ENCODE measurements at regions of chr2 and their contacts with region 1.

Region 1: DNA sequence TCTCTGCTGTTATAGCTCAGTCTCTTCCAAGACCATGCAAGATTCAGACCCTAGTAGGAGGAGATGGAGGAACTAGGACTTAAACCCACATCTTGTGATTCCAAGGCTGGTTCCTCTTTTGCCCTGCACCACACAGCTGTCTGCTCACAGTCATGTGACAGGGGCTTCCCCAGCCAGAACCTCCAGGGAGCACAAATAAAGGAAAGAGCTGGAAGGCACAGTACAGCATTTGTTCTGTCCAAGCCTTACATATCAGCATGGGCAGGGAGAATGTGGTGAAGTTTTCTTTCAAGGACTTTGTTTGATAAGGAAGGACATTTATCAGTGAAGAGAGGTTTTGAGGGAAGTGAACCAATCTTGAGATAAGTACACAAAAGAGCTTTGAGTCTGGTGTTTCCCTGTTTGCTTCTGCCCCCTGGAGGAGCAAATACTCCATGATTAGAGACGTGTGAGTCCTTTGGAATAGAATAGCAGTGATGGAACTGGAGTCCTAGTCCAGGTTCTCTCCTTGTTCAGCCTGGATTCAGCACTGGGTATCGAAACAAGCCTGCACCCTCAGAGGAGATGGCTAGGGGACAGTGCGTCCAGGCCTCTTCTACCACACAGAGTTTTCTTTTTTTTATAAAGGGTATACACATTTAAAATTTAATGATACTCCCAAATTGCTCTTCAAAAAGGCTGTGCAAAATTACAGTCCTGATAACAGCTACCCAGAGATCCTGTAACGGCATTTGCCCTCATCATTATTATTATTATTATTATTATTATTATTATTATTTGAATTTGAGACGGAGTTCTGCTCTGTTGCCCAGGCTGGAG is 24.6 kb upstream of the CASP10 start:
- H3K4me3 ChIP-seq: no peak overlapping the region
- H3K27ac ChIP-seq: no peak overlapping the region
- H3K4me1 ChIP-seq: 0 out of 2 replicates have a peak, but pooled peaks cover 2% of the 10 kb centered on the region
- CTCF ChIP-seq: peak; percentile 62

Region 2: DNA sequence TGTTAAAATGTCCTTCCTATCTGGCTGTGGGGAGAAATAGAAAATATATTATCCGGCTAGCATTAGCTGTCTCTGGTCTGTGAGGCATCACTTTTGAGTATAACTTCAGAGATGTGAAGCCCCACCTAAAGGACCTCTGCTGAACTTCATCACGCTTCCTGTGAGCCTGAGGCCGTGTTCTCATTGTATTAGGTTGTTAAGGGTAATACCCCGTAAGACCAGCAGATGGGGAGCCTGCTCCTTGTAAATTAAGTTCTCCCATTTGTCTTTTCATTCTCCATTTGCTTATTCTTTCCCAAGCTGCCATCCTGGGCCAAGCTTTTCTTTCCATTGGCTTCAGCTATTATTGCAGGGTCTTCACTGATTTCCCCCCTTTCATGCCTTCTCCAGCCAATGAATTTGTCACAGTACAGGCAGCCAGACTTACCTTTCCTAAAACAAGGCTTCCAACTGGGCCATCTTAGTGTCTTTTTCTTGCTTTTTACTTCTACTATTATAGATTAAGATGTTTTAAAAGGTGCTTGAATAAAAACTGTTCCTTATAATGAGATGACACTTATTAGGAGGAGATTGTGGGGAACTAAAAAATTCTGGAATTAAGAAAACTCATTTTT is 256.8 kb before region 1 on chr2:
- CTCF ChIA-PET with region 1: interaction called, 20 read pairs
- POLR2A ChIA-PET with region 1: interaction called, 5 read pairs
- H3K4me3 ChIP-seq: no peak overlapping the region
- H3K27ac ChIP-seq: no peak overlapping the region
- H3K4me1 ChIP-seq: no peaks in the 10 kb centered on the region
- CTCF ChIP-seq: peak; percentile 78

Region 3: DNA sequence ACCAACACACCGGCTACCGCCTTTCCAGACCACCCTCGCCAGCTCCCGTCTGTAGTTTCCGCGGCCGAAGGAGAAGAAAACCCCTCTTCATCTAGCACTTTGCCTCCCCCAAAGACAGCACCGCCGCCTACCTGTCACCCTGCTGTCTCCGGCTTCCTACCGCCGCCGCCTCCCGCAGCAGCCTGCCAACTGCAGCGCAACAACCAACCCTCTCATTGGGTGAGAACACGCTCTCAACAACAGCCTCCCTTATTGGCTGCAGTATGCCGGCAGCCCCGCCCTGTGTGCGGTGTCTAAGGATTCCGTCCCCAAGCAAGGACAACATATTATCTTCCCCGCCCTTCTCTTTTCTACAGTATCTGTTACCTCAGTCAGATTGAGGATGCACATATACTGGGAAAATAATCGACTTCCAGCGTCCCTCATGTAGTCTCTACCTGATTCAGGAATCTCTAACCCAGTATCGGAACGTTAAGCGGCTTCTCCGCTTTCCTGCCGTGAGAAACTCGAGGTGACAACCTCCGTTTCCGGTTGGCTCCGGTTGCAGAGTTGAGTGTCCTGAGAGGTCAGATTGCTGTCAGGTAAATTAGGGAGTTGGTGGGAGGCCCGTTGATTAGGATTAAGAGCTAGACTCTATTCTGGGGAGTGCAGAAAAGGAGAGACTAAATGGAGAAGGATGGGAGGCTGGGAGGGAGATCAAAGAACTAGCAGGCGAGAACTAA is 86.7 kb before region 1 on chr2 and contains the starts of genes HYCC2 and NDUFB3:
- CTCF ChIA-PET with region 1: interaction called, 39 read pairs
- POLR2A ChIA-PET with region 1: interaction called, 6 read pairs
- H3K4me3 ChIP-seq: peak within 1 kb of the TSS; percentile 100
- H3K27ac ChIP-seq: peak within 1 kb of the TSS; percentile 85
- H3K4me1 ChIP-seq: 0 out of 2 replicates have a peak, but pooled peaks cover 3% of the 10 kb centered on the region
- CTCF ChIP-seq: peak; percentile 98

Region 4: DNA sequence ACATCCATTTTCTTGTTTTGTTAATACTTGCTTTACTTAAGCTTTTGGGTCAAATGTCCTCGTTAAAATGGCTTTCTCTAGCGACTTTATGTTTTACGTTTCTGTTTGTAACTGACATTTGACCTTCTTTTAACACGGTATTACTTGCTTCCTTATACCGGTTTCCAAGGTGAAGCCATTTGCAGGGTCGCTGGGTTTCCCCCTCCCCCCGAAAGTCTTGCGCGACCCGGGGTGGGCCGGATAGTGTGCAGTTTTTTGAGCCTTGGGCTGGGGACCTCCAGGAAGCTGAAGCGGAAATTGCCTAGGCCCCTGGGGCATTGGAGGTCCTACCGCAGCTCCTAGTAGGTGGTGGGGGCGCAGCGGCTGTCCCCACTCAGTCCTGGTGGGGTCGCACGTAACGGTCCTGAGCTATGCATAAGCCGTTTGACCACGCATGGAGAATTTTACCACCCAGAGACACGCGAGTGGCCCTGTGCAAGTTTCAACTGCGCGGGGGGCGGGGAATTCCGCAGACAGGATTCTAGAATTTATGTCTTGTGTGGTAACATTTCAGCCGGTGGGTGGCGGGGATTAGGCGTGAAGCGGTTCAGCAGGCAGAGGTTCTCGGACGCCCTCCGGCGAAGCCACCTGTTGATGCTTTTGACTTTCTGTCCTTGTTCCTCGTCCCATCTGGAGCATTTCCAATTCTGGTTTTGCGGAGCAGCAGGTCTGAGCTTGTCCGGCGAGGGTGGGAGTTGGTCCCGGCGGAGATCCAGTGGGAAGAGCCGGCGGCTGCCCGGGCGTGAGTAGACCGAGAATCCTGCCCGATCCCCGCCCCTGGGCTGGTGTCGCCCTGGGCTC is 40.0 kb before region 1 on chr2:
- CTCF ChIA-PET with region 1: interaction called, 25 read pairs
- POLR2A ChIA-PET with region 1: interaction called, 7 read pairs
- H3K4me3 ChIP-seq: peak overlapping the region; percentile 40
- H3K27ac ChIP-seq: peak overlapping the region; percentile 95
- H3K4me1 ChIP-seq: peaks cover 5% of the 10 kb centered on the region; the same call in 1 of the 2 replicates
- CTCF ChIP-seq: peak; percentile 94

Region 5: DNA sequence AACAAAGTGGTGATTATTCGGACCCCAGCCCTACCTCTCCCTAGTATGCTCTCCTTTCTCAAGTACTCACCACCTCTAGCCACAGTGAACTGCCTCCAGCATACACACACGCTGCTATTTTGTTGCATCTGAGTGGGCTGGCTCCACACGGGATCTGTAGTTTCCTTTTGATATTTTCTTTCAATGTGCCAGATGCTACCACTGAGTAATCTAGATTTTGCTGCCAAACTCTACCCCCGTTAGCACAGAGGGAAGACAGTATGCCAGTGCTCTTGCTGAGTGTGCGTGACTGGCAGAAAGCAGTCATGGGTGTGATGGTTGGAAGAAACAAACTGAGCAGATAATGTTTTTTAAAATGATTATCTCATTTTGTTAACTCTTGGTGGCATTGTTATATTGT is 30.8 kb before region 1 on chr2:
- CTCF ChIA-PET with region 1: interaction called, 11 read pairs
- POLR2A ChIA-PET with region 1: interaction called, 3 read pairs
- H3K4me3 ChIP-seq: no peak overlapping the region
- H3K27ac ChIP-seq: no peak overlapping the region
- H3K4me1 ChIP-seq: peaks cover 19% of the 10 kb centered on the region
- CTCF ChIP-seq: no peak

Region 6: DNA sequence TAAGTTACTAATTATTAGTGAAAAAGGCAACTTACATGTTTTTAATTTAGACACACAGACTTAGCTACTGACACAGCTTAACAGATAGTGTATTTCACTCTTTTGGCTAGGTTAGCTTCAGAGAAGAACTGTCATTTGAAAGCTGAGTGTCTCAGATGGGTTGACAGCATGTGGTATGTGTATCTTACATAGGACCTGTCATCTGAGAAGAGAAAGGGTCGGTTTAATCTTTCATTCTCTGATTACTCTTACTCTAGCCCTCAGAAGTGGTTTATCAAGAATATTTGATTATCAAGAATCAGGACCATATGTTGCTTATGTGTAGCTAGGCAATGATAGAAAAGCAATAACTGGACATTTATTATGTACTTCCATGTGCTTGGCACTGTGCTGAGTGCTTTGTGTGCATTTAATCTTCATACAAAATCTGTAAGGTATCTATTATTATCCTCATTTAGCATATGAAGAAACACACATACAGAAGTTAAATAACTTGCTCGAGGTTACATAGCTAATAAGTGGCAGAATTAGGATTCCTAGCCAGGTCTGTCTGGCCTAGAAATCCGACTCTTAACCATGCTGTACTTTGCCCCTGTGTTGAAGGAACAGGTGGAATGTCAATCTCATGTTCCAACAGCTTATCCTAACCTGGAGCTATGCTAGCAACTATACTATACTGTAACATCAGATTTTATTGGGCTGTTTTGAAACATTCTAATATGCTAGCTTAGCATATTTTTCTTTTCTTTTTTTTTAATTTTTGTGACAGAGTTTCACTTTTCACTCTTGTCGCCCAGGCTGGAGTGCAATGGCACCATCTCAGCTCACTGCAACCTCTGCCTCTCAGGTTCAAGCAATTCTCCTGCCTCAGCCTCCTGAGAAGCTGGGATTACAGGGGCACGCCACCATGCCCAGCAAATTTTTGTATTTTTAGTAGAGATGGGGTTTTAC is 13.9 kb before region 1 on chr2:
- CTCF ChIA-PET with region 1: interaction called, 22 read pairs
- POLR2A ChIA-PET with region 1: interaction called, 6 read pairs
- H3K4me3 ChIP-seq: no peak overlapping the region
- H3K27ac ChIP-seq: no peak overlapping the region
- H3K4me1 ChIP-seq: no peaks in the 10 kb centered on the region
- CTCF ChIP-seq: no peak

Region 7: DNA sequence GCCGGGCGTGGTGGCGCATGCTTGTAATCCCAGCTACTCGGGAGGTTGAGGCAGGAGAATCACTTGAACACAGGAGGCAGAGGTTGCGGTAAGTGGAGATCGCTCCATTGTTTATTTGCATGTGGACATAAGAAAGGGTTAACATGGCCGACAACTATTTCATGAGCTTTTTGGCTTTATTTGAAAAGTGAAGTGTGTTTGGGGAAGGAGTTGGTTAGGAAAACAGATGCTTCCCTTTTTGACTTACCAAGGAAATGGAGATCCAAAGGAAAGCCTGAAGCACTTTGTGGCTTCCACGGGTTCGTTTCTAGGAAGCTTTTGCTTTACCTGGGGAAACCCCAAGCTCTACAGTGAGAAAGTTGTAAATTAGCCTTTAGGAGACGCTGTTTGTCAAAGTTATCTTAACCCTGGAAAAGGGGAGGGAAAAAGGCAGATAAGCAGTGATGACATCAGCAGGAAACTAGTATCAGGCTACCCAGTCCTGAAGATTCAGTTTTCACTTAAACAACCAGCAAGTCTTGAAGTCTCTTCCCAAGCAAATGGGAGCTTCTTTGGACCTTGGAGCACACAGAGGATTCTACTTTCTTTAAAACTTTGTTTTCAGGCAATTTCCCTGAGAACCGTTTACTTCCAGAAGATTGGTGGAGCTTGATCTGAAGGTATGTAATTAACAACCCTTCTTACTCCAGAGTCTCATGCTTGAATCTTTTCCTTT is 24.5 kb after region 1 on chr2 and contains the start of gene CASP10:
- CTCF ChIA-PET with region 1: interaction called, 11 read pairs
- POLR2A ChIA-PET with region 1: no interaction called
- H3K4me3 ChIP-seq: peak within 1 kb of the TSS; percentile 42
- H3K27ac ChIP-seq: no peak within 1 kb of the TSS
- H3K4me1 ChIP-seq: no peaks in the 10 kb centered on the region
- CTCF ChIP-seq: peak; percentile 81